Naive thymus-derived CD4-positive, alpha-beta T cell (primary cell): ENCODE measurements at regions of chr15 and their contacts with region 1.

Region 1: GRCh38 chr15:51982013-51982769 is 10.6 kb upstream of the LEO1 start:
- DNase-seq: peak in 8 of 9 donors; percentile 45 to 78 (median 60)
- ATAC-seq: peak; percentile 97
- H3K4me3 ChIP-seq: peak overlapping the region; percentile 2
- H3K4me3 Mint-ChIP-seq: peak overlapping the region; percentile 51 to 89 (median 79)
- H3K27ac ChIP-seq: peak overlapping the region; percentile 38
- H3K27ac Mint-ChIP-seq: peak overlapping the region; percentile 68 to 93 (median 82)
- H3K4me1 ChIP-seq: peaks cover 0 to 10% of the 10 kb centered on the region in 2 donors
- H3K4me1 Mint-ChIP-seq: peaks cover 10 to 15% (median 12%) of the 10 kb centered on the region in 7 donors
- H3K27me3 ChIP-seq: no peaks in the 10 kb centered on the region
- H3K27me3 Mint-ChIP-seq: peaks cover 0 to 4% (median 0%) of the 10 kb centered on the region in 5 donors

Region 2: DNA sequence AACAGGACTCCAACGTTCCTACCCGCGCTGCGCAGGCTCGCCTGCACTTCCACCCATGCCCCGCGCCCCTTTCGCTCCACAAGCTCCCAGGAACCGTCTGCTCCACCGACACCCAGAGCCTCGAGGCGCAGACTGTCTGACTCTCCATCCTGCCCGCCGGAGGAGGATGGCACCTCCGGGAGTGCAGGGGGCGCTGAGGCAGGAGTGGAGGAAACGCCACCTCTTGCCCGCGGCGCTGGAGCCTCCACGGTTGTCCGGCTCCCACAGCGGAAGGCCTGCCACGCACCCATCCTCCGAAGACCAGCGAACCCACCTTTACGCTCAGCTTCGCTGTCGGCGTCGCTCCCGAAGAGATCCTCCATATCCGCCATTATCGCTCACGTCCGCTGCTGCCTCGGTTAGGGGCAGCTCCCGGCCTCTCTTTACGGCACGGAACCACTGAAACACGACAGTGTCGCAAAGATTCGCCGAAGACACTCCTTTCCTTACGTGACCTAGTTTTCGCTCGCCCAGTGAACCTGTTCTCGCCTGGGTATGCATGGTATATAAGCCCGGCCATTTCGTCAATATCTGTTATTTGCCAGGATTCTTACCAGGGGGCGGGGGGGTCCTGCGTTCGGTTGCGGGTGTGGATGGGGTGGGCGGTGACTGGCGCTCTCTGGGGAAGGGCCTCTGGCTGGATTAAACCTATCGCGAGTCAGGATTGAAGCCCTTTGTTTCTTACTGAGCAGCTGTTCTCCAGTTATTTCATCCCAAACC is 10.6 kb before region 1 on chr15 and contains the start of gene LEO1:
- CTCF ChIA-PET with region 1: interaction called, 8 read pairs
- POLR2A ChIA-PET with region 1: interaction called, 19 read pairs
- intact Hi-C with region 1: loop called (anchors 1 kb)
- DNase-seq: peak; percentile 59 to 94 (median 91)
- ATAC-seq: peak; percentile 98
- H3K4me3 ChIP-seq: peak within 1 kb of the TSS; percentile 95
- H3K4me3 Mint-ChIP-seq: peak within 1 kb of the TSS; percentile 97 to 99 (median 98)
- H3K27ac ChIP-seq: peak within 1 kb of the TSS; percentile 79
- H3K27ac Mint-ChIP-seq: peak within 1 kb of the TSS; percentile 94 to 100 (median 98)
- H3K4me1 ChIP-seq: peaks cover 11 to 13% of the 10 kb centered on the region in 2 donors
- H3K4me1 Mint-ChIP-seq: peaks cover 10 to 33% (median 26%) of the 10 kb centered on the region in 7 donors
- H3K27me3 ChIP-seq: no peaks in the 10 kb centered on the region
- H3K27me3 Mint-ChIP-seq: peaks cover 0 to 3% (median 0%) of the 10 kb centered on the region in 5 donors
- total RNA-seq, gene LEO1: 9.2 to 30.1 (median 19.3) TPM

Region 3: GRCh38 chr15:52018693-52019387 is 36.6 kb after region 1 on chr15 and contains the start of gene MAPK6:
- CTCF ChIA-PET with region 1: no interaction called
- POLR2A ChIA-PET with region 1: interaction called, 3 read pairs
- intact Hi-C with region 1: loop called (anchors 1 kb)
- DNase-seq: peak; percentile 91 to 96 (median 94)
- ATAC-seq: peak; percentile 95
- H3K4me3 ChIP-seq: peak within 1 kb of the TSS; percentile 79
- H3K4me3 Mint-ChIP-seq: peak within 1 kb of the TSS; percentile 90 to 99 (median 96)
- H3K27ac ChIP-seq: peak within 1 kb of the TSS; percentile 88
- H3K27ac Mint-ChIP-seq: peak within 1 kb of the TSS; percentile 88 to 100 (median 98)
- H3K4me1 ChIP-seq: peaks cover 9 to 29% of the 10 kb centered on the region in 2 donors
- H3K4me1 Mint-ChIP-seq: peaks cover 32 to 50% (median 39%) of the 10 kb centered on the region in 7 donors
- H3K27me3 ChIP-seq: no peaks in the 10 kb centered on the region
- H3K27me3 Mint-ChIP-seq: peaks cover 0 to 15% (median 0%) of the 10 kb centered on the region in 5 donors
- total RNA-seq, gene MAPK6: 19.2 to 44.1 (median 25.3) TPM

Region 4: GRCh38 chr15:52078876-52079700 is 96.9 kb after region 1 on chr15:
- CTCF ChIA-PET with region 1: interaction called, 32 read pairs
- POLR2A ChIA-PET with region 1: no interaction called
- intact Hi-C with region 1: loop called (anchors 1 kb)
- DNase-seq: peak; percentile 58 to 82 (median 75)
- ATAC-seq: peak; percentile 87
- H3K4me3 ChIP-seq: no peak overlapping the region
- H3K4me3 Mint-ChIP-seq: no peak overlapping the region
- H3K27ac ChIP-seq: no peak overlapping the region
- H3K27ac Mint-ChIP-seq: peak overlapping the region in 1 of 9 donors; percentile 49
- H3K4me1 ChIP-seq: peaks cover 0 to 13% of the 10 kb centered on the region in 2 donors
- H3K4me1 Mint-ChIP-seq: peaks cover 0 to 26% (median 10%) of the 10 kb centered on the region in 7 donors
- H3K27me3 ChIP-seq: no peaks in the 10 kb centered on the region
- H3K27me3 Mint-ChIP-seq: peaks cover 0 to 7% (median 0%) of the 10 kb centered on the region in 5 donors

Region 5: DNA sequence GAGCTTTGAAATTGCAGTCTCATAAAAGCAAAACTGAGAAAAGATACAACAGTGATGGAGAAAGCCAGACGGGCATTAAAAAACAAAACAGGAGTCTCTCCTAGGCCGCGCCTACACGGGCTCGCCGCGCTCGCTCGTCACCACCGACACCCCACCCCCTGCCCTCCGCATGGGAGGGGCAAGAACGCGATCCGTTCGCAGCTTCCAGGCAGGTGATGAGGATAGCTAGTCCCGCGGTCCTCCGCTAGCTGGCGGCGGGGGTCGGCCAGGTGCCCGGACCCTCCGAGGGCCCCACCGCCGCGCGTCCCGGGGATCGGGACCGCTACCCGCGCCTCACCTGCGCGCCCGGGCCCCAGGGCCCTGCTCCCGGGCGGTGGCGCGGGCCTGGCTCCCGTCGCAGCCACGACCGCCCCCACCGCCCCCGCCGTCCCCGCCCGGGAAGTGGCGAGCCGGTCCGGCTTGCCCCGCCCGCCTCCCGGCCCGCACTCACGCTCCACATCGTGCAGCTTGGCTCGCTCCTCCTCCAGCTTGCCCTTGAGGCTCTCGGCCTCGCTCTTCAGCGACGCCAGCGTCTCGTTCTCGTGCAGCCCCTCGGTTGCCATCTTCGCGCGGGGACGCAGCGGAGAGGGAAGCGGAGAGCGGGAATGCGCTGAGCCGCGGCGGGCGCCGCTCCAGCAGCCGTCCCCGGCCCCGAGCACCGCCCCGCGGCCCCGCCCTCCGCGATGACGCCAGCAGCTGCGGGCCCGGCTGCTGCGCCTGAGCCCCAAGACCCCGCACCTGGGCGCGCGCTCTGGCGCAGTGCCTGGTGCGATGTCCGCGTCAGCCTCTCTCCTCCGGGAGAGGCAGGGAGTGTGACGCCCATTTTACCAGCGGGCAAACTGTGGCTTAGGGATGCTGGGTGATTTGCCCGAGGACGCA is 197.3 kb after region 1 on chr15:
- CTCF ChIA-PET with region 1: no interaction called
- POLR2A ChIA-PET with region 1: no interaction called
- intact Hi-C with region 1: loop called in 1 of 2 experiments (anchors 1 kb)
- DNase-seq: peak; percentile 79 to 92 (median 91)
- ATAC-seq: peak; percentile 91
- H3K4me3 ChIP-seq: peak overlapping the region; percentile 98
- H3K4me3 Mint-ChIP-seq: peak overlapping the region; percentile 86 to 100 (median 94)
- H3K27ac ChIP-seq: peak overlapping the region; percentile 95
- H3K27ac Mint-ChIP-seq: peak overlapping the region; percentile 90 to 99 (median 98)
- H3K4me1 ChIP-seq: peaks cover 19 to 20% of the 10 kb centered on the region in 2 donors
- H3K4me1 Mint-ChIP-seq: peaks cover 14 to 50% (median 40%) of the 10 kb centered on the region in 7 donors
- H3K27me3 ChIP-seq: no peaks in the 10 kb centered on the region
- H3K27me3 Mint-ChIP-seq: no peaks in the 10 kb centered on the region

Region 6: DNA sequence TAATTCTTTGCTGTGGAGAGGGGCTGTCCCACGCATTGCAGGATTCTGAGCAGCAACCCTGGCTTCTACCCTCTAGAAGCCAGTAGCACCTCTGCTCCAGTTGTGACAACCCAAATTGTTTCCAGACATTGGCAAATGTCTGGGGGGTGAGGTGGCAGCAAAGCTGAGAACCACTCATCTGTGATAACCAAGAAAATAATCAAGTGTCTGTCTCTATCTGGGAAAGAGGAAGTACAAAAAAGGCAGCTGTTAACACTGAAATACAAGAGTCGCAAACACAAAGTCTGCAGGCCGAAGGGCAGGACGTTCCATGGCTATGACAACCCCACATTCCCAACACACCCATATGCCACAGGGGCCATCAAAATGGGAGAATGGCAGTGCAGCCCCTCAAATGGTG is 251.2 kb after region 1 on chr15:
- CTCF ChIA-PET with region 1: no interaction called
- POLR2A ChIA-PET with region 1: no interaction called
- intact Hi-C with region 1: no loop called
- DNase-seq: no peak
- ATAC-seq: peak; percentile 13
- H3K4me3 ChIP-seq: no peak overlapping the region
- H3K4me3 Mint-ChIP-seq: peak overlapping the region in 9 of 10 donors; percentile 43 to 75 (median 65)
- H3K27ac ChIP-seq: peak overlapping the region; percentile 71
- H3K27ac Mint-ChIP-seq: peak overlapping the region in 8 of 9 donors; percentile 95 to 98 (median 96)
- H3K4me1 ChIP-seq: peaks cover 0 to 29% of the 10 kb centered on the region in 2 donors
- H3K4me1 Mint-ChIP-seq: peaks cover 23 to 58% (median 46%) of the 10 kb centered on the region in 7 donors
- H3K27me3 ChIP-seq: no peaks in the 10 kb centered on the region
- H3K27me3 Mint-ChIP-seq: no peaks in the 10 kb centered on the region

Region 7: DNA sequence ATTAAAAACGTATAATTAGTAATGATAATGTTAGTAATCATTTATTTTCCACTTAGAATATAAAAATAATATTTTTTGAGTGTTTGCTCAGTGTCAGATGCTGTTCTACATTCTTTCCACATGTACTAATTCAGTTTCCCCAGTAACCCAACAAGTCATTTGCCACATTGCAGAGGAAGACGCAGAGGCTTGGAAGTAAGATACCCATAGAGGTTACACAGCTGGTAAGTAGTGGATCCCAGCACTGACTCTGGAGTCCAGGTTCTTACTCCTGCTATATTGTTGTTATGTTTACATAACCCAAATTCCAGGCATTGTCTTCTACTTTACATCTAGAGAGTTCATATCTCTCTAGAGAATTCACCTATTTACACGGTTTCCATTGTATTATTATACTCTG is 361.6 kb after region 1 on chr15:
- CTCF ChIA-PET with region 1: no interaction called
- POLR2A ChIA-PET with region 1: no interaction called
- intact Hi-C with region 1: no loop called
- DNase-seq: no peak
- ATAC-seq: no peak
- H3K4me3 ChIP-seq: no peak overlapping the region
- H3K4me3 Mint-ChIP-seq: no peak overlapping the region
- H3K27ac ChIP-seq: no peak overlapping the region
- H3K27ac Mint-ChIP-seq: no peak overlapping the region
- H3K4me1 ChIP-seq: no peaks in the 10 kb centered on the region
- H3K4me1 Mint-ChIP-seq: peaks cover 0 to 11% (median 0%) of the 10 kb centered on the region in 7 donors
- H3K27me3 ChIP-seq: no peaks in the 10 kb centered on the region
- H3K27me3 Mint-ChIP-seq: no peaks in the 10 kb centered on the region

Region 8: DNA sequence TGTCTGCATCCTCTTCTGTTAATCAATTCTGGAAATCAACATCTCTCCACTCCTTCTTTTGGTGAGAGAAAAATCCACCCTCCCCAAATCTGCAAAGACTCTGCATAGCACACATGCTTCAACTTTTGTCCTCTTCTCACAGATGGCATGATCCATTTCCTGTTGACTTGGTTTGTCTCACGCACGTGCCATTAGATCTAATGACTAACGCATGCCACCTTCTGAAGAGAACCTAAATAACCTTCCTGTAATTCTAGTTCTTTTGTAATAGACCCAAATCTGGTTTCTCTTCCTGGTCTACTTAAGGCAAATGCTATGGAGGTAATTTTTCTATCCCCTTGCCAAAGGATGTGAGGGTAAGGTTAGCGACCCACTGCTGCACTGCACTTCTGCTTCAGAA is 748.0 kb after region 1 on chr15:
- CTCF ChIA-PET with region 1: no interaction called
- POLR2A ChIA-PET with region 1: no interaction called
- intact Hi-C with region 1: loop called in 1 of 2 experiments (anchors 5 kb)
- DNase-seq: peak in 7 of 9 donors; percentile 53 to 82 (median 75)
- ATAC-seq: peak; percentile 96
- H3K4me3 ChIP-seq: no peak overlapping the region
- H3K4me3 Mint-ChIP-seq: peak overlapping the region; percentile 10 to 69 (median 50)
- H3K27ac ChIP-seq: no peak overlapping the region
- H3K27ac Mint-ChIP-seq: peak overlapping the region; percentile 56 to 94 (median 87)
- H3K4me1 ChIP-seq: peaks cover 11 to 15% of the 10 kb centered on the region in 2 donors
- H3K4me1 Mint-ChIP-seq: peaks cover 6 to 31% (median 20%) of the 10 kb centered on the region in 7 donors
- H3K27me3 ChIP-seq: no peaks in the 10 kb centered on the region
- H3K27me3 Mint-ChIP-seq: no peaks in the 10 kb centered on the region